A673 (cell line): ENCODE measurements at regions of chr14 and their contacts with region 1.

Region 1: DNA sequence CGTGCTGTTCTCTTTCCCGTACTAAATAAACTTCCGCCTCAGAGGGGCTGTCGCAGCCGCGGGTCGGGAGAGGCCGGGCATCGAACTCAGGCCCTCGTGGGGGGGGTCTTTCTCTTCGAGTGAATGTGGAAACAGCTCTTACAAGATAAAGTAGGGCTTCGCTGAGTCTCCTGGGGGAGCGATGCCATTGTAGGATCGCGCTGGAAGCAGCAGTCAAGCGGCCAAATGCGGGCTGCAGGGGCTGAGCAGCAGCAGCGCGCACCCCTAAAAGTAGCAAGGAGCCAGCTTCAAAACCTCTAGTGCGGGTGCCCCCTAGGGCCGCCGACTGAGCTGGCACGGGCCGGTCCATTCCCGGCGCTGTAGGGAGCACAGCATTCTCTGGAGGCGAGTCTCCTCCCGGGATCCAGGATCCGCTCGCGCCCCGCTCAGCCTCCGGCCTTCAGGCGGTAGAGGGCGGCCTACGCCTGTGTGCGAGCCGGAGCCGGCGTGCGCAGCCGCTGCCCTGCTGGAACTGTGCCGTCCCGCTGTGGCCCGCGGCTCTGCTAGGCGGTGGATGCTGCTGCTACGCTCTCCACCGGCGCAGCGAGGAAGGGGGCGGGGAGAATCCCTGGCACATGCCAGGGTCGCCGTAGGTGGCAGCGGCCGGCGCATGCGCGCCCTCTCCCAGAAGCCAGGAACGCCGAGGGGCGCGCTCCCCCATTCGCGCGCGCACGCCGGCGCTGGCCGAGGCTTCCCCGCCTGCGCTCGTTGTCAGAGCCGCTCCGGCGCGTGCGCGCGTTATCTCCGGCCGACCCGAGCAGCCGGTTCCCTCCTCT is at the start of gene FUT8:
- DNase-seq: peak; percentile 96
- H3K4me3 ChIP-seq: peak within 1 kb of the TSS; percentile 68
- H3K27ac ChIP-seq: peak within 1 kb of the TSS; percentile 68
- H3K4me1 ChIP-seq: peaks cover 5% of the 10 kb centered on the region
- H3K27me3 ChIP-seq: no peaks in the 10 kb centered on the region
- CTCF ChIP-seq: peak; percentile 69
- total RNA-seq, gene FUT8: 11.0 and 11.6 TPM in 2 replicates

Region 2: DNA sequence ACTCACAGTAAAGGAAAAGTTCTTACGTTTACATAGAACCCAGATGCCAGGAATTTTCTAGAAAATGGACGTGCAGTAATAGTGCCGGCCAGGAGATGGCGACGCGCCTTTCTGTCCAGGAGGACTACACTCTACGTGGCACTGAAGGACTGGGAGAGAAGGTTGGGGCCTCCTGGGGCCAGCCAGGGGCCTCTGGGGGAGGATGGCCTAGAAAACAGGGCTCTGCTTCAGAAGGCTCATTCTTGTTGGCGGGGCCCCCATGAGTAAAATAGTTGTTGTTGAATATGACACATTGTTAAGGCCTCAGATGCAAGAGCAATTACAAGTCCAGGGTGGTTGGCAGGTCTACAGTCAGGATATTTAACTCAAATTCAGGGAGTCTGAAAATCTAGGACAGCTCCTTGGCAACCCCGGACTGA is 189.8 kb before region 1 on chr14:
- CTCF ChIA-PET with region 1: interaction called, 3 read pairs
- POLR2A ChIA-PET with region 1: no interaction called
- intact Hi-C with region 1: loop called (anchors 5 kb)
- DNase-seq: peak; percentile 60
- H3K4me3 ChIP-seq: no peak overlapping the region
- H3K27ac ChIP-seq: no peak overlapping the region
- H3K4me1 ChIP-seq: peaks cover 18% of the 10 kb centered on the region
- H3K27me3 ChIP-seq: no peaks in the 10 kb centered on the region
- CTCF ChIP-seq: peak; percentile 93

Region 3: GRCh38 chr14:65731933-65732510 is 319.8 kb after region 1 on chr14:
- CTCF ChIA-PET with region 1: no interaction called
- POLR2A ChIA-PET with region 1: no interaction called
- intact Hi-C with region 1: no loop called
- DNase-seq: no peak
- H3K4me3 ChIP-seq: no peak overlapping the region
- H3K27ac ChIP-seq: no peak overlapping the region
- H3K4me1 ChIP-seq: no peaks in the 10 kb centered on the region
- H3K27me3 ChIP-seq: no peaks in the 10 kb centered on the region
- CTCF ChIP-seq: no peak

Region 4: DNA sequence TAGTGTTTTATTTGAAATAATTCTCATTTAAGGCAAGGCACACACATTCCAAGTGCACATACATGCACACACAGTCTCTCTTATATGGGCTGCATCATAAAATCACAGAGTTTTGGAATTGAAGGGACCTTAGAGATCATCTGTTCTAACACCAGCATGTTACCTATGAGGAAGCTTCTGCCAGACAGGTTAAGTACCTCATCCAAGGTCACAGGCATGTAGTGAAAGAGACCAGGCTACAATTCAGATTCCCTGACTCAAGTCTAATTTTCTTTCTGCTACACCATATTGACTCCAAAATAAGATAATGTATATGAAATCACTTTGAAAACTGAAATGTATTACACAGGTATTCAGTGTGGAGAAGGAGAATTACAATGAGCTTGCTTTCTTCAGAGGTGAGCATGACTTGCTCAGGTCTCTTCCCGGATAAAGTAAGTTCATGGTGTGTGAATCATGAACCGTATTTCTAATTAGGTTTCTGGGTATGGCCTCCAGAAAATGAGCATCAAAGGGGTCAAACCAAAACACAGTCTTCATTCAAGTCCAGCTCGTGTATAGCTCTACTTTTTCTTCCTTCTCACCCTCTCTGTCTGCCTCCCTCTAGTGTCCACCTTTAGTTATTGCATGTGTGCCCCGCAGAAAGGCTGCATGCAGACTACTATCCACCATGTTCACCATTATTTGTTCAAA is 412.2 kb after region 1 on chr14:
- CTCF ChIA-PET with region 1: interaction called, 25 read pairs
- POLR2A ChIA-PET with region 1: no interaction called
- intact Hi-C with region 1: loop called (anchors 1 kb)
- DNase-seq: peak; percentile 70
- H3K4me3 ChIP-seq: no peak overlapping the region
- H3K27ac ChIP-seq: no peak overlapping the region
- H3K4me1 ChIP-seq: no peaks in the 10 kb centered on the region
- H3K27me3 ChIP-seq: peaks cover 17% of the 10 kb centered on the region
- CTCF ChIP-seq: peak; percentile 92

Region 5: GRCh38 chr14:65958664-65959562 is 546.7 kb after region 1 on chr14:
- CTCF ChIA-PET with region 1: interaction called, 8 read pairs
- POLR2A ChIA-PET with region 1: no interaction called
- intact Hi-C with region 1: loop called (anchors 5 kb)
- DNase-seq: peak; percentile 45
- H3K4me3 ChIP-seq: no peak overlapping the region
- H3K27ac ChIP-seq: no peak overlapping the region
- H3K4me1 ChIP-seq: no peaks in the 10 kb centered on the region
- H3K27me3 ChIP-seq: no peaks in the 10 kb centered on the region
- CTCF ChIP-seq: peak; percentile 59